ENCODE measurements at regions of chr22 and their contacts with region 1.

Region 1: GRCh38 chr22:26650722-26651421 is 6.5 kb upstream of the MIAT start:
- DNase-seq: no peak
- ATAC-seq: peak; percentile 37
- H3K4me3 Mint-ChIP-seq: no peak overlapping the region
- H3K27ac Mint-ChIP-seq: peak overlapping the region; percentile 11
- H3K4me1 Mint-ChIP-seq: peaks cover 59% of the 10 kb centered on the region
- H3K27me3 Mint-ChIP-seq: peaks cover 10% of the 10 kb centered on the region

Region 2: DNA sequence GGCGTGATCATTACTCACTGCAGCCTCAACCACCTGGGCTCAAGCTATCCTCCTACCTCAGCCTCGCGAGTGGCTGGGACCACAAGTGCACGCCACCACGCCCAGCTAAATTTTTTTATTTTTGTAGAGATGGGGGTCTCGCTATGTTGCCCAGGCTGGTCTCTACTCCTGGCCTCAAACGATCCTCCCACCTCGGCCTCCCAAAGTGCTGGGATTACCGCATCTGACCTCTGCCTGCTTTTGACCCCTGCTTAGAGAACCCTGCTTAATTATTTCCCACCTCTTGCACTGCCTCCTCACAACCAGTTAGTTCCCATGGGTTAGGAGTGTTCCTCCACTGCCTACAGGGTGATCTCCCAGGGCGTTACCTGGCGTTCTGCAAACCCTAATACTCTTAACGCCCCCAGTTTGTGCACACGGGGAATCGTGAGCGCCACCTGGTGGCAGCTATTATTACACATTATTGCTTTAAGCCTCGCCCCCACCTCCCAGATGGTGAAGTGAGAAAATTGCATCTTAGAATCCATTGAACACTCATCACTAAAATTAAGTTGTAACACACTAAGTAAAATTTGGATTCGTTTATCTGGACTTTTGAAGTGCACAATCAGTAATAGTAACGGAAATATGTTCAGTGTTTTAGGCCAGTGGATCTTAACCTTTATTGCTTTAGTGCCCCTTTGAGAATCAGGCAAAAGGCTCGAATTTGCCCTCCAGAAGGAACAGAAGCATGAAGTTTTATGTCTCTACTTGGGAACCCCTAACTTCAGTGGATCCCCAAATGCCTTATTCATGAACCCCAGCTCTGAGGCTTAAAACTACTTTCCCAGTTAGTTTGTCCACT is 283.2 kb before region 1 on chr22:
- CTCF ChIA-PET with region 1: no interaction called
- DNase-seq: peak; percentile 71
- ATAC-seq: peak; percentile 72
- H3K4me3 Mint-ChIP-seq: no peak overlapping the region
- H3K27ac Mint-ChIP-seq: no peak overlapping the region
- H3K4me1 Mint-ChIP-seq: no peaks in the 10 kb centered on the region
- H3K27me3 Mint-ChIP-seq: peaks cover 21% of the 10 kb centered on the region

Region 3: DNA sequence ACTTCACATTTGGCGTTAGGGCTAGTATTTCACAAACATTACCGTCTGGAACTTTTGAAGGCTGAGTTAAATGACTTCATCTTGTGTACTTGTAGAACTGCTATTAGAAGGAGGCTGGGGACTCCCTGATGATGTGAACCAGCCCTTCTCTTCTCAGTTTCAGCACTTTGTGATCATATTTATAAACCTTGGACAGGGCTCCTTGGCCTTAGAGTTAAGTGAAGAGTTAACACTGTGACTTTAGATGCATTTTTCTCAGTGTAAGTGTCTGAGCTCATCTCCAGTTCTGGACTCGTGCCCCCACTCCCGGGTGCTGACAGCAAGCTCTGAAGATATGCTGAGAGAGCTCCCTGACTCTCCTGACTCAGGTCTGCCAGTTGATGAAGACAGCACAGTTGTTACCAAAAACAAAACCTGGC is 14.9 kb after region 1 on chr22:
- CTCF ChIA-PET with region 1: interaction called, 10 read pairs
- DNase-seq: no peak
- ATAC-seq: peak; percentile 14
- H3K4me3 Mint-ChIP-seq: no peak overlapping the region
- H3K27ac Mint-ChIP-seq: peak overlapping the region; percentile 86
- H3K4me1 Mint-ChIP-seq: peaks cover 76% of the 10 kb centered on the region
- H3K27me3 Mint-ChIP-seq: no peaks in the 10 kb centered on the region